Head of caudate nucleus (tissue), 42 donors: ENCODE measurements at regions of chr1 and their contacts with region 1.

Region 1: GRCh38 chr1:36703526-36704208 is 221.0 kb upstream of the CSF3R start:
- DNase-seq: peak; percentile 79 to 95 (median 89)

Region 2: GRCh38 chr1:36752891-36753361 is 49.3 kb after region 1 on chr1:
- intact Hi-C with region 1: no loop called
- DNase-seq: peak in 2 of 42 donors; percentile 2 to 11

Region 3: DNA sequence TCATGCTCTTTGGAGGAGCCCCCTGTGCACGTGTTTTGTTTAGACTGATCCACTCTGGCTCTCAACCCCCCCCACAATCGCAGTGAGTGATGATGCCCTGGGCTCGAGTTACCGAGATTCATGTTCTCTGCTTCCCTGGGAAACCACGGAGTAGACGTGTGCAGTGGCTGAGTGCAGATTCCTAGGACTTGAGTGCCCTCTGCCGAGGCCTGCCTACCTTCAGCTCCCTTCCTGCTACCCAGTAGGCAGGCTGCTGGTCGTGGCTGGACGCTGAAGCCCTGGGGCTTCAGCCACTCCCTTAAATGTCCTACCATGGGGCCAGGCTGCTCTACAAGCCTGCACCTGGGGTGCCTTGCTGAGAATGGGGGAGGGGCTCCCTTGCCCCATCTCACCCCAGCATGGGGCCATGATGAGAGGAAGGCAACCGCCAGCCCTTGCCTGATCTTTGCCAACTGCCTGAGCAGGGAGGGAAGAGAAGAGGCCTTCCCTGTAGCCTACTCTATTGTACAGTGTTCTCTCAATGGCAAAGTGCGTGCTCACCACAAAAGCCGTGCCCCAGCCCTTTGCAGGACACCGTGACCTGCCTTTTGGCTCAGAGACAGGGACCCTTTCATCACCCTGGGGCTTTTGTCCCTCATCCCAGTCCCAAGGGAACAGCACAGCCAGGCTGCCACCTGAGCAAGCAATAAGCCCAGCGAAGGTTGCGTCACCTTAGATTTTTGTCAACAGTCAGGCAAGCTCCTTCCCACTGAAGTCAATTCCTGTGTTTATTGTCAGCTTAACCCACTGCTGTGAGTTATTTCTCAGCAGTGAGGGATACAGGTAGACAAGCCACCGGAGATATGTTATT is 334.8 kb after region 1 on chr1:
- intact Hi-C with region 1: loop called (anchors 5 kb)
- DNase-seq: peak in 41 of 42 donors; percentile 41 to 88 (median 71)

Region 4: GRCh38 chr1:37306461-37306860 is 602.8 kb after region 1 on chr1:
- intact Hi-C with region 1: loop called (anchors 10 kb)
- DNase-seq: no peak

Region 5: DNA sequence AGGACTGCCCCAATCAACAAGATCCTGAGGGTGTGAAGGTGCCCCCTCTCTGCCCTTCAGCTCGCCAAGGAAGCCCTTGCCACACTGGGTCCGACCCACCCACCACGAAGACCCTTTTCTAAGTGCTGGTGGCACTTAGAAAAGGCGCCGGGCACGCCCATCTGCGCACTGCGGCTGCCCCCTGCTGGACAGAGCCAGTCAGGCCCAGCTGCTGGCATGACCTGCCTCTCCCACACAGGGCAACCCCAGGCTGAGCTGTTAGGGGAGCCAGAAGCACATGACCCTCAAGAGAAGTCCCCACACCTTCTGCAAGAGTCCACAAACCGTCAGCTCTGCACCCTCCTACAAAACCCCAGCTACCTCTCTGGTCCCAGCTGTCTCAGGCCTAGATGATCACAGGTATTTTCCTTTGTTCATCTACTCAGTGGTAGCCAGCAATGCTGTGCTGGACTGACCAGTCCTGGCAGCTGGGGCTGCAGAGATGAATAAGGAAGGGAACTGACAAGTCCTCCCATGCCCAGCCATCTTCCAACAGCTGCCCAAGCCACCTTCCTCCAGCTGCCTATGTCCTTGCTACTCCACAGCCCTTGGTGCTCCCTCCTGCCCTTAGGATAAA is 730.7 kb after region 1 on chr1:
- intact Hi-C with region 1: loop called (anchors 10 kb)
- DNase-seq: peak; percentile 69 to 93 (median 86)